Head of caudate nucleus (tissue), 42 donors: ENCODE measurements at regions of chr2 and their contacts with region 1.

Region 1: DNA sequence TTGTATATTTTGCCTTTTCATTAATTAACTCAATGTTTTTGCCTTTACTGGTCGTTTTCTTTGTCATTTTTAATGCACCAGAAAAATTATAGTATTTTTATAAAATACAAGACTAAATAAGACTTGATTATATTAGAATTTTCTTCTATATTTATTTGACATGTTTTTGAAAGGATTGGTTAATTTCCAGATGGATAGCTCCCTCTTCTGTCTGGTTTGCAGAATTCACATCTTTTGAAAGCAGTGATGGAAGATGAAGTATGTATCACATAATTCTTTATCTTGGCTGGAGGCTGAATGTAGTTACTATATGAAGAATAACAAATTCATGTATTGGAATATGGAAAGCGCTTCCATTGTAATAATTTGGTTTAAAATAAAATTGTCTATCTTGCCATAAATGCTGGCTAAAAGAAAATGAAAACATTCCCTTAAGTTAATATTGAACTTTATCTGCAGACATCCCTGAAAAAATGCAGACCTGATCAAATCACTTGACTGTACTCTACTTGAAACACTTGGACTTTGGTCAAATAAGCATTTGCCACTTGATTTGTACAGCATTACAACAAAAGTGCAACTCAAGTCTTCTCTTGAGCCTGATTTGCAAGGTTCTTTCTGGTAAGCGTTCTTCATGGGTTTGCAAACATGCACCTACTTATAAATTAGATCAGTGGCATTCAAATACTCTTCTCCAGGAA is 86.3 kb upstream of the EFEMP1 start:
- DNase-seq: peak in 1 of 42 donors; percentile 44

Region 2: GRCh38 chr2:55718165-55719008 is 291.5 kb before region 1 on chr2:
- intact Hi-C with region 1: loop called (anchors 5 kb)
- DNase-seq: peak in 38 of 42 donors; percentile 26 to 90 (median 68)

Region 3: DNA sequence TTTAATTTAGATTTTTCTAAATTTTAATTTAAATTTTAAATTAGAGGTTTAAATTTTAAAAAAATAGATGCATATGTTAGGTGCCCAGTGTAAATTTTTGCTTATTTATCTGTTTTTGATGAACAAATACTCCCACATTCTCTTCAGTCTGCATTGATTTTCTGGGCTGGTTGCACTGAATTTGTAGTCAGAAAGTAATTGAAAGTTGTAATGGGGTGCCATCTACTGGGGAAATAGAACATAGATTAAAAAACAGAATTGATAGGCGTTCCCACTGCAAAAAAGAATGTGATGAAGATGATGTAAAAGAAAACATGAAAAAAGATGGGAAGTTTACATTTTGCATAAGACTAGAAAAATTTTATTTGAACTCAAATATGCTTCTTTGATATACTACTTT is 122.2 kb after region 1 on chr2:
- intact Hi-C with region 1: loop called (anchors 10 kb)
- DNase-seq: peak in 5 of 42 donors; percentile 14 to 54 (median 24)